B cell (primary cell): ENCODE measurements at regions of chr17 and their contacts with region 1.

Region 1: GRCh38 chr17:35011671-35012210 is 31.4 kb downstream of the LIG3 start:
- DNase-seq: no peak
- ATAC-seq: no peak
- H3K4me3 ChIP-seq: no peak overlapping the region
- H3K4me3 Mint-ChIP-seq: no peak overlapping the region
- H3K27ac ChIP-seq: no peak overlapping the region
- H3K27ac Mint-ChIP-seq: peak overlapping the region; percentile 11
- H3K4me1 ChIP-seq: no peaks in the 10 kb centered on the region
- H3K4me1 Mint-ChIP-seq: no peaks in the 10 kb centered on the region
- H3K27me3 ChIP-seq: no peaks in the 10 kb centered on the region
- H3K27me3 Mint-ChIP-seq: no peaks in the 10 kb centered on the region
- CTCF ChIP-seq: no peak

Region 2: GRCh38 chr17:35063514-35064223 is 51.9 kb after region 1 on chr17 and contains the start of gene RFFL:
- CTCF ChIA-PET with region 1: interaction called, 3 read pairs
- POLR2A ChIA-PET with region 1: no interaction called
- intact Hi-C with region 1: loop called (anchors 5 kb)
- DNase-seq: peak; percentile 82
- ATAC-seq: peak; percentile 97
- H3K4me3 ChIP-seq: peak within 1 kb of the TSS in 3 of 5 experiments; percentile 20 to 38 (median 30)
- H3K4me3 Mint-ChIP-seq: peak within 1 kb of the TSS; percentile 75
- H3K27ac ChIP-seq: peak within 1 kb of the TSS; percentile 42 to 63
- H3K27ac Mint-ChIP-seq: peak within 1 kb of the TSS; percentile 90
- H3K4me1 ChIP-seq: peaks cover 11 to 12% of the 10 kb centered on the region in 2 donors
- H3K4me1 Mint-ChIP-seq: peaks cover 28% of the 10 kb centered on the region
- H3K27me3 ChIP-seq: no peaks in the 10 kb centered on the region
- H3K27me3 Mint-ChIP-seq: no peaks in the 10 kb centered on the region
- CTCF ChIP-seq: no peak
- total RNA-seq, gene RFFL: 36.2 and 36.9 TPM in 2 replicates

Region 3: DNA sequence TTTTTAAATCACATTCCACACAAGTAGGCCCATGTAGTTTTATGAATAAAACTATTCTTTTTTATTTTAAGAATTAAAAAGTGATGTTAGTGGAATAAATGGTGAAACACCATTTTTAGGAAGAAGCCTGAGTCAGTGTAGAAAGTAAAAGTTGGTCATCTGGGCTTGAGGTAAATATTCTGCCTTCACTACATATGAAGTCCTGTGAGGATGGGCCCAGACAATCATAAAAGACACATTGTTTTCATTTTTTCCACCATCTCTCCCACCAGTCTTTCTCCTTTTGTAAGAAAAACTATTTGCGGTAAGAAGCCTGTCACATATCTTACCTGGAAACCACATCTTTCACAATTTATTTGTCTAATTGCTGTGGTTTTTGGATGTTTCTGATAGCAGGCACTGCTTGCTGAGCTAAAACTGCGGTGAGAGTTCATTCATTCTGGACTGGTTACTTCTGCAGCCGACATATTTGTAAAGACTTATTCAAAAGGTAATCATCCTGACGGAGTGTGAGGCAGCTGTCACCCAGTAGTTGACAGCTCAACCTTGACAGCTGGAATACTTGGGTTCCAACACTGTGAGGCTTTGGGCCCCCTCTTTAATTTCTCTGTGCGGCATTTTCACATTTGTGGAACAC is 62.4 kb after region 1 on chr17:
- CTCF ChIA-PET with region 1: no interaction called
- POLR2A ChIA-PET with region 1: no interaction called
- intact Hi-C with region 1: no loop called
- DNase-seq: no peak
- ATAC-seq: no peak
- H3K4me3 ChIP-seq: no peak overlapping the region
- H3K4me3 Mint-ChIP-seq: no peak overlapping the region
- H3K27ac ChIP-seq: no peak overlapping the region
- H3K27ac Mint-ChIP-seq: no peak overlapping the region
- H3K4me1 ChIP-seq: peaks cover 6 to 8% of the 10 kb centered on the region in 2 donors
- H3K4me1 Mint-ChIP-seq: peaks cover 34% of the 10 kb centered on the region
- H3K27me3 ChIP-seq: no peaks in the 10 kb centered on the region
- H3K27me3 Mint-ChIP-seq: no peaks in the 10 kb centered on the region
- CTCF ChIP-seq: no peak

Region 4: GRCh38 chr17:36566081-36566480 is 1554.3 kb after region 1 on chr17:
- CTCF ChIA-PET with region 1: no interaction called
- POLR2A ChIA-PET with region 1: interaction called, 16 read pairs
- intact Hi-C with region 1: no loop called
- DNase-seq: no peak
- ATAC-seq: no peak
- H3K4me3 ChIP-seq: no peak overlapping the region
- H3K4me3 Mint-ChIP-seq: no peak overlapping the region
- H3K27ac ChIP-seq: no peak overlapping the region
- H3K27ac Mint-ChIP-seq: no peak overlapping the region
- H3K4me1 ChIP-seq: no peaks in the 10 kb centered on the region
- H3K4me1 Mint-ChIP-seq: peaks cover 6% of the 10 kb centered on the region
- H3K27me3 ChIP-seq: no peaks in the 10 kb centered on the region
- H3K27me3 Mint-ChIP-seq: no peaks in the 10 kb centered on the region
- CTCF ChIP-seq: no peak